Activated naive CD4-positive, alpha-beta T cell treated with anti-CD3 and anti-CD28 coated beads for 36 hours (primary cell): ENCODE measurements at regions of chr5 and their contacts with region 1.

Region 1: DNA sequence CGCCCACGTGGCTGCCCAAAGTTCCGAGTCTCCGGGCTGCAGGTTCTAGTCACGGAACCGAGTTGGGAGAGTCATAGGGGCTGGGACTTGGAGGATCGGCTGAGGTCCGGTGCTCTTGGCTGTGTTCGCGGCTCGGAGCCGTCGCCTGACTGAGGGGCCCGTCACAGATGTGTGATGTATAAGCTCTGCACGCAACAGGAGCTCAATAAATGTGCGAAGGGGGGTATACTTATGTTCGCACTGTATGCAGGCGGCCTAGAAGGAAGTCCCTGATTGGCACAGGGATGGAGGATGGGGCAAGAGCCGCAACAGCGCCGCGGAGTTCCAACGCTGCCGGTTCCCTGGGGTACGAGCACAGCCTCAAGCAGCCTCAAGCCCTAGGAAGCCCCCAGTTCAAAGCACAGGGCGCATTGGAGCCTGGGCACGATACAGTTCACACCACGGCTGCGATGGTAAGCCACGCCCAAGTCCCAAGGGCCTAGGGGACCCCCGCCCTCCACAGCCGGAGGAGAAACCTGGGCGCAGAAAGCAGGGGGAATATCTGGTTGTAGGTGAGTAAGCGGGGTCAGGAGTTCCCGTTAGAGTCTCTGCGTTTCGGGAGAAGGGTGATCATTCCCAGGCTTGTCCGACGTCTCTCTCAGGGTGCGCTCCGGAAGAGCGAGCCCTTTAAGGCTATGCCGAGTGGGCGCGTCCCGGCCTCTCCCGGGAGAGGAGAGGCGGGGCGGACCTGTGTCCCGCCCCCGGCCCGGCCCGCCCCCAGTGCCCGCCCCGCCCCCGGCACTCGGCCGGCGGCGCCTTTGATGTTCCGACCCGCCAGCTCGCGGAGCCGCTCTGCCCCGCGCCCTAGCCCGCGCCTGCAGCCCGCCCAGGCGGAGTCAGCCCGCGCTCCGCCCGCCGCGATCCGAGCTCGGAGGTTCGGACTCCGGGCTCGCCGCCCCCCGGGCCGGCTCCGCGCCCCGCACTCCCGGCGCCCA is at the start of gene TCF7:
- DNase-seq: peak; percentile 81
- H3K4me3 Mint-ChIP-seq: peak within 1 kb of the TSS; percentile 81
- H3K27ac Mint-ChIP-seq: peak within 1 kb of the TSS; percentile 91
- H3K4me1 Mint-ChIP-seq: peaks cover 64% of the 10 kb centered on the region
- H3K27me3 Mint-ChIP-seq: no peaks in the 10 kb centered on the region
- total RNA-seq, gene TCF7: 87.9 to 92.3 TPM

Region 2: GRCh38 chr5:134070725-134071613 is 43.2 kb before region 1 on chr5:
- CTCF ChIA-PET with region 1: interaction called, 7 read pairs
- intact Hi-C with region 1: loop called (anchors 1 kb)
- DNase-seq: peak; percentile 85
- H3K4me3 Mint-ChIP-seq: peak overlapping the region; percentile 79
- H3K27ac Mint-ChIP-seq: peak overlapping the region; percentile 97
- H3K4me1 Mint-ChIP-seq: peaks cover 70% of the 10 kb centered on the region
- H3K27me3 Mint-ChIP-seq: no peaks in the 10 kb centered on the region

Region 3: GRCh38 chr5:134125039-134126015 is 11.1 kb after region 1 on chr5:
- CTCF ChIA-PET with region 1: interaction called, 437 read pairs
- intact Hi-C with region 1: loop called (anchors 1 kb)
- DNase-seq: no peak
- H3K4me3 Mint-ChIP-seq: peak overlapping the region; percentile 79
- H3K27ac Mint-ChIP-seq: peak overlapping the region; percentile 90
- H3K4me1 Mint-ChIP-seq: peaks cover 100% of the 10 kb centered on the region
- H3K27me3 Mint-ChIP-seq: no peaks in the 10 kb centered on the region

Region 4: DNA sequence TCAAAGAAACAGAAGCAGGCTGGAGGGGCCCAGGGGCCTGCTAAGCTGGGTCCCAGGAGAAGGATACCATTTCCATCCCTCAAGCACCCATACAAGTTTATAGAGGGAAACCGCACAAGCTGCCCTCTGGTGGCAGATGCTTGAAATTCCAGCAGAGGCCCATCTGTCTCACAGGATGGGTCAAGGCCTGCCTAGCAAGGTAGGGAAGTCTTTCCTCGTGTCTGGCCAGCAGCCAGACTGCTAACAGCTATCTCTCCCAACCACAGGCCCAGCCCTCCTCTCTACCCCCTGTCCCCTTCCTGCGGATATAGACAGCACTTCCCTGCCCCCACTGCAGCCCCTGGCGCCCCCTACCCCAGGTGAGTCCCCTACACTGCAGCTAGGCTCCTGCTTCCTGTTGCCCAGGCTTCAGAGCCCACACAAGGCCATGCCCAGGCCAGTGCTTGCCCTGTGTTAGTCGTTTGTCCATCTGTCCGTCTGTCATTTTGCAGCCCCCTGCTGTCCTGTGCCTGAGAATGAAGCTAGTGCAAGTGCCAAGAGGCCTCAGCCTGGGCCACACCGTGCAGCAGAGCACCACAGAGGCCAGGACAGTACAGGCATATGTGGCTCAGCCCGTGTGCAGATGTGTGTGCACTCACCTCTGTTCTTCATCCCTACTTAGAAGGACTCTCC is 26.5 kb after region 1 on chr5:
- CTCF ChIA-PET with region 1: interaction called, 437 read pairs
- intact Hi-C with region 1: loop called (anchors 1 kb)
- DNase-seq: peak; percentile 83
- H3K4me3 Mint-ChIP-seq: no peak overlapping the region
- H3K27ac Mint-ChIP-seq: peak overlapping the region; percentile 82
- H3K4me1 Mint-ChIP-seq: peaks cover 66% of the 10 kb centered on the region
- H3K27me3 Mint-ChIP-seq: no peaks in the 10 kb centered on the region

Region 5: GRCh38 chr5:134176511-134177368 is 62.6 kb after region 1 on chr5 and contains the start of gene SKP1:
- CTCF ChIA-PET with region 1: interaction called, 3 read pairs
- intact Hi-C with region 1: loop called (anchors 1 kb)
- DNase-seq: peak; percentile 83
- H3K4me3 Mint-ChIP-seq: peak within 1 kb of the TSS; percentile 96
- H3K27ac Mint-ChIP-seq: peak within 1 kb of the TSS; percentile 94
- H3K4me1 Mint-ChIP-seq: peaks cover 31% of the 10 kb centered on the region
- H3K27me3 Mint-ChIP-seq: no peaks in the 10 kb centered on the region
- total RNA-seq, gene SKP1: 307 to 309 TPM